A673 (cell line): ENCODE measurements at regions of chr2 and their contacts with region 1.

Region 1: DNA sequence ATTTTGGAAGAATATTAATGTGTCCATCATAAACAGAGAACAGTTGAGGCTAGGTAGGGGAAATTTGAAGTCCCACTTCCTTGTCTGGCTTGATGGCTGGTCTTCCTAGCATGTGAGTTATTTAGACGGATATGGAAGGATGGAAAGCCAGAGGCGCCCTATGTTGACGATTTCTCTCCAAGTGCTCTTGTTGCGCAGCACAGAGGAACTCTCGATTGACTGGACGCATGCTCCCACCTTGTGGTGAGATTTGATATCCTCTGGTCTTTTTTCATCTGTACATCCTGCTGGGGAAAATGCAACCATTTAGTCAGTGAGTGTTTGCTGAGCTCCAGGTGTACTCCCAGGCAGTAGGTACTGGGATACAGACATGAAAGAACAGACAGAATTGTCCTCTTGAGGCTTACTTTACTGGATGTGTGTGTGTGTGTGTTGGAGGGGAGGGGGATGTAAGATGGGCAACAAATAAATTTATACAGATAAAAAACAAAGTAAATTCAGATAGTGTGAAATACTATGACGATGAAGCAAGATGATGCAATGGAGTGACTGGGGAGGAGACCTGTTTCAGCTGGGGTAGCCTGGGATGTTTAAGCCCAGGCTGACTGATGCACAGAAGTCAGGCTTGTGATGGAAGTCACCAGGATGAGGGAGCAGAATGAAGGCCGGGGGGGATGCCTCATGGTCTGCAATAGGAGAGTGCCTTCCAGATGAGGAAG is 137.2 kb downstream of the TRIM43 start:
- DNase-seq: peak; percentile 72
- H3K4me3 ChIP-seq: no peak overlapping the region
- H3K27ac ChIP-seq: no peak overlapping the region
- H3K4me1 ChIP-seq: no peaks in the 10 kb centered on the region
- H3K27me3 ChIP-seq: no peaks in the 10 kb centered on the region
- CTCF ChIP-seq: peak; percentile 59

Region 2: DNA sequence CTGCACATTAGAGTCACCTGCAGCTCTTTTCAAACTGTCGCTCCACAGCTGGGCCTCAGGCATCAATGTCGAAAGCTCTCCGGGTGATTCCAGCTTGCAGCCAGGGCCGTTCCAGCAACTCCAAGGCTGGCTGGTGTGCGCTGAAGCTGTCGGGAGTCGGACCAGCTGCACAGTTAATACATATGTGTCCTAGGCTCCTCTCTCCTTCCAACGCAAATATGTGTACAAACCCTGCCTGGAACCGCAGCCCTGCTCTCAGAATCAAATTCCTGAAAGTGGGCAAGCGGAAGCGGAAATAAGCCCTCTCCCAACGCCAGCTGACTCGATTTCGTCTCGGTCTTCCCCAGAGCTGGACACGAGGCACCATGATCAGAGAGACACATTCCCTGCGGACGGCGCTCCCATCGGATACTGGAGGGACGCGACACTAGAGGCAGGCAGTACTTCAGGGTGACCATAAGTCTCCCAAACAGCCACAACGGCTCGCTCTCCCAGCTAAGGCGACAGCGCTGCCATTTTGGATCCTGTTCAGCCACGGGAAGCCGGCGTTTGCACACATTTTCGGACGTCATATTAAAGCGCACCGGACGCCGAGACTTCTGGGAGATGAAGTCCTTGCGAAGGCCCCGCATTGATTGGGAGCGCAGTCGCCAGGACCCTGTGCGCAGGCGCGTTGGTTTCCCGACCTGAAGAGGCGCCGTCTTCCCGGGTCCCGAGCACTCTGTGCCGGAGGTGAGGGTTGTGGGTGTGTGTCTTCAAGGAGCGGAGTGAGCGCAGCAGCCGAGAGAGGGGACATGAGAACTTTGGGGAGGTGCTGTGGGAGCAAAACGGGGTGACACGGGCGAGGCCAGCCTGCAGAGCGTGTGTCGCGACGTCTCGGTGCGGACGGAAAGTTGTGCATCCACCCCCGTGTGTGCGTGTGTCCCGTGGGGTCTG is 563.6 kb before region 1 on chr2 and contains the start of gene ZNF2:
- CTCF ChIA-PET with region 1: no interaction called
- POLR2A ChIA-PET with region 1: no interaction called
- intact Hi-C with region 1: no loop called
- DNase-seq: peak; percentile 99
- H3K4me3 ChIP-seq: peak within 1 kb of the TSS; percentile 88
- H3K27ac ChIP-seq: peak within 1 kb of the TSS; percentile 92
- H3K4me1 ChIP-seq: peaks cover 6% of the 10 kb centered on the region
- H3K27me3 ChIP-seq: no peaks in the 10 kb centered on the region
- CTCF ChIP-seq: no peak
- total RNA-seq, gene ZNF2: 4.6 and 5.6 TPM in 2 replicates

Region 3: GRCh38 chr2:95185197-95185596 is 543.8 kb before region 1 on chr2:
- CTCF ChIA-PET with region 1: no interaction called
- POLR2A ChIA-PET with region 1: no interaction called
- intact Hi-C with region 1: loop called (anchors 10 kb)
- DNase-seq: no peak
- H3K4me3 ChIP-seq: no peak overlapping the region
- H3K27ac ChIP-seq: no peak overlapping the region
- H3K4me1 ChIP-seq: no peaks in the 10 kb centered on the region
- H3K27me3 ChIP-seq: no peaks in the 10 kb centered on the region
- CTCF ChIP-seq: no peak

Region 4: DNA sequence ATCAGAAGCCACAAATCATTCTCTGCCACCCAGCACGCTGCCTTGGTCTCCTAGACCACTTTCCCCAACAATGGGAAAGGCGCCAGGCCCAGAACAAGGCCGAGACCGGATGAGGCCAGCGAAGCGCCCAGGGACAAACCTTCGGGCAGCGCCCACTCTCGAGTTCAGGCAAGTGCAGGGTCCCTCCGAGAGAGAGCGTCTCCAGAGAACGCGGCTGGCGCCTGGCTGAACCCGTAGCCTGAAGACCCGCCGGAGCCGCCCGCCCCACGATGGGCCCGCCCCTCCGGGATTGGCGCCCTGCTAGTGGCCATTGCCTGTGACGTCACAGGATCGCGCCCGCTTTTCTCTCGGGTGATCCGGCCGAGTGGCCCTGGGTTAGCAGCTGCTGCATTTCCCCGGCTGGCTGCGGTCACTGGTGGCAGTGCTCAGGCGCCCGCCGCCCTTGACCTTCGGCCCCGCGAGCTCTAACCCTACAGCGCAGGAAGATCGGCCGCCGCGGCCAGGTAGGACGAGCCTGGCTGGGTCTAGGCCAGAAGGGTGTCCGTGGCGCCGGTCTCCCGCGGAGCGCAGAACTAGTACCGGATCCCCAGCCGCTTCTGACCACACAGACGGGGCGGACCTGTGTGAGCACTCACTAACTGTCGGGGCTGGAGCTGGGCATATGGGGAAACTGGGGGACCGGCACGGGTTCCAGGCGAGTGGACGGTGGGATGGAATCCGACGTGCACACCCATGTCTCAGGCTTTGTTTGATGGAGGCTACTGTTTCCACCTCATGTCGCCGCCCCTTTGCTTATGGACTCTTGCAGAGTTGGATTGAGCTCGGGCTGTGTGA is 326.4 kb before region 1 on chr2 and contains the start of gene FAHD2A:
- CTCF ChIA-PET with region 1: no interaction called
- POLR2A ChIA-PET with region 1: no interaction called
- intact Hi-C with region 1: loop called (anchors 5 kb)
- DNase-seq: peak; percentile 92
- H3K4me3 ChIP-seq: peak within 1 kb of the TSS; percentile 99
- H3K27ac ChIP-seq: peak within 1 kb of the TSS; percentile 90
- H3K4me1 ChIP-seq: no peaks in the 10 kb centered on the region
- H3K27me3 ChIP-seq: no peaks in the 10 kb centered on the region
- CTCF ChIP-seq: no peak
- total RNA-seq, gene FAHD2A: 28.9 and 34.4 TPM in 2 replicates